ENCODE measurements at regions of chr21 and their contacts with region 1.

Region 1: GRCh38 chr21:42818328-42818749 is 61.0 kb downstream of the WDR4 start:
- DNase-seq: peak; percentile 69 to 71 (median 70)
- ATAC-seq: peak; percentile 98
- H3K4me3 ChIP-seq: no peak overlapping the region
- H3K27ac ChIP-seq: no peak overlapping the region
- H3K4me1 ChIP-seq: no peaks in the 10 kb centered on the region
- H3K27me3 ChIP-seq: peaks cover 0 to 15% of the 10 kb centered on the region in 2 experiments; a peak in 3 of 5 replicates
- CTCF ChIP-seq: peak; percentile 86 to 95 (median 91)
- EP300 ChIP-seq: no peak
- POLR2A ChIP-seq: no peak
- RAD21 ChIP-seq: peak; percentile 67 to 92

Region 2: GRCh38 chr21:42593007-42593806 is 225.1 kb before region 1 on chr21:
- CTCF ChIA-PET with region 1: interaction called, 3 read pairs
- POLR2A ChIA-PET with region 1: no interaction called
- in situ Hi-C with region 1: loop called (anchors 10 kb)
- intact Hi-C with region 1: loop called (anchors 5 kb)
- DNase-seq: peak; percentile 80 to 94 (median 91)
- ATAC-seq: peak; percentile 99
- H3K4me3 ChIP-seq: no peak overlapping the region
- H3K27ac ChIP-seq: no peak overlapping the region
- H3K4me1 ChIP-seq: peaks cover 0 to 8% of the 10 kb centered on the region in 2 experiments; a peak in 1 of 5 replicates
- H3K27me3 ChIP-seq: peaks cover 54 to 65% of the 10 kb centered on the region in 2 experiments
- CTCF ChIP-seq: peak; percentile 67 to 89 (median 85)
- EP300 ChIP-seq: no peak
- POLR2A ChIP-seq: no peak
- RAD21 ChIP-seq: peak; percentile 73 to 84

Region 3: DNA sequence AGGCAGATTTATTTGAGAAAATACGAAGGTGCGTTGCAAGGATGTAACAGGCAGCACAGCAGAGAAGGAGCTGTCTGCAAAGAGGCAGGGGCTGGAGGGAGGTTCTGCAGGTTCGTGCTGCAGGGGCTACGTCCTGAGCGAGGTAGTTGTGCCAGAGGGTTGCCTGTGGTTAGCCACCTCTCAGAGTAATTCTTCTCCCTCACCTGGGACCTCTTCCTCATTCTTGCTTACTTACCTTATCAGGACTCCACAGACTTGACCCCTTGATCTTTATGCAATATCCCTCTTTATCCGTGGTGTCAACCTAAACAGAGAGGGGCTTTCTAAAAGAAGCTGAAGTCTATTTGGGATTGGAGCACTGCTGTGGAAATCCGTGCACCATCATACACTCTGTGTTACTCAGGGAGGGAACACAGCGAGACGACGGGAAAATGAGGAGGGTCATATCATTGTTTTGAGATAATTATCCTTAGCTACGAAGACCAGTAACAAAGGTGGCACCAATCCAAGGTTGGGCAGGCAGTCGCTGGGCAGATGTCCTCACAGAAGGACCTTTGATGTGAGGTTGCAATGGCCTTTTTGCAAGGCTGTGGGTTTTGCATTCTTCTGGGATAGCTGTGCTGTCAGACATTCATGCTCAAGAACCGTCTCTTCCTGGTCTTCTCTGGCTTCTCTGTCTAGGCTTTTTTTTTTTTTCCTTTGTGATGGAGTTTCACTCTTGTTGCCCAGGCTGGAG is 21.8 kb before region 1 on chr21:
- CTCF ChIA-PET with region 1: interaction called, 3 read pairs
- POLR2A ChIA-PET with region 1: interaction called, 3 read pairs
- in situ Hi-C with region 1: no loop called
- intact Hi-C with region 1: loop called (anchors 1 kb)
- DNase-seq: peak in 2 of 4 experiments; percentile 20 to 37
- ATAC-seq: peak; percentile 45
- H3K4me3 ChIP-seq: no peak overlapping the region
- H3K27ac ChIP-seq: no peak overlapping the region
- H3K4me1 ChIP-seq: no peaks in the 10 kb centered on the region; a peak in 2 of 5 replicates
- H3K27me3 ChIP-seq: peaks cover 31 to 57% of the 10 kb centered on the region in 2 experiments; a peak in 4 of 5 replicates
- CTCF ChIP-seq: no peak
- EP300 ChIP-seq: no peak
- POLR2A ChIP-seq: no peak
- RAD21 ChIP-seq: no peak